Activated CD4-positive, alpha-beta T cell treated with anti-CD3 and anti-CD28 coated beads for 36 hours (primary cell): ENCODE measurements at regions of chr15 and their contacts with region 1.

Region 1: GRCh38 chr15:33132722-33133345 is 61.7 kb downstream of the FMN1 start:
- DNase-seq: peak; percentile 21
- ATAC-seq: peak; percentile 39
- H3K4me3 Mint-ChIP-seq: no peak overlapping the region
- H3K27ac Mint-ChIP-seq: no peak overlapping the region
- H3K4me1 Mint-ChIP-seq: peaks cover 1% of the 10 kb centered on the region
- H3K27me3 Mint-ChIP-seq: no peaks in the 10 kb centered on the region

Region 2: GRCh38 chr15:33021806-33022389 is 110.9 kb before region 1 on chr15:
- CTCF ChIA-PET with region 1: interaction called, 6 read pairs
- POLR2A ChIA-PET with region 1: no interaction called
- intact Hi-C with region 1: loop called (anchors 1 to 5 kb)
- DNase-seq: no peak
- ATAC-seq: no peak
- H3K4me3 Mint-ChIP-seq: no peak overlapping the region
- H3K27ac Mint-ChIP-seq: no peak overlapping the region
- H3K4me1 Mint-ChIP-seq: no peaks in the 10 kb centered on the region
- H3K27me3 Mint-ChIP-seq: no peaks in the 10 kb centered on the region